ENCODE measurements at regions of chr2 and their contacts with region 1.

Region 1: DNA sequence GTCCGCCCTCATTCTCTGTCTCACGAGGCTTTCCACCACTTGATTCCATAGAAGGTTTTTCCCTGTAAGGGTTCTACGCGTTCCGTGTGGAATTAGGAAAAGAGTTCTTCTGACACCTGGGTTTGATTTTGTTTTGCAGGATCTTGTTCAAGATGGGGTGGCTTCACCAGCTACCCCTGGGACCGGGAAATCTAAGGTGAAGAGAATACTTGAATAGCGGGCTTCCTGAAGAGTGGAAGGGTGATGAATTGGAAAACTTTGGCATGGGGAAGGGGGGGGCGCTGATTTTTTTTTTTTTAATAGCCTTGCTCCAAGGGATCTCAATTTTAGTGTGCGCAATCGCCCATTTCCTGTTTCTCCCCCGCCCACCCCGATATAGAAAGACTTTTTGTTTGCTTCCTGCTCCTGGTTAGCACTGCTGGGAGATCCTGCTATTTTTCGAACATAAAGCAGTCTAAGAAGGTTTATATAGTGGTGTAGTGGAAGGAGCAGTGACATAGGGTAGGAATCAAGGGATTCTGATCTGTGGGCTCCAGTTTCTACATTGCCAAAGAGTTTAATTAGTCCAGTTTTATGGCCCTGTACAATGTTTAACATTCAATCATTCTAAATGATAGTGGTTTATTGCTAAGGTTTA is 606 bp downstream of the GCC2 start:
- DNase-seq: no peak

Region 2: GRCh38 chr2:108315444-108315934 is 134.1 kb before region 1 on chr2:
- in situ Hi-C with region 1: no loop called
- DNase-seq: peak; percentile 76

Region 3: DNA sequence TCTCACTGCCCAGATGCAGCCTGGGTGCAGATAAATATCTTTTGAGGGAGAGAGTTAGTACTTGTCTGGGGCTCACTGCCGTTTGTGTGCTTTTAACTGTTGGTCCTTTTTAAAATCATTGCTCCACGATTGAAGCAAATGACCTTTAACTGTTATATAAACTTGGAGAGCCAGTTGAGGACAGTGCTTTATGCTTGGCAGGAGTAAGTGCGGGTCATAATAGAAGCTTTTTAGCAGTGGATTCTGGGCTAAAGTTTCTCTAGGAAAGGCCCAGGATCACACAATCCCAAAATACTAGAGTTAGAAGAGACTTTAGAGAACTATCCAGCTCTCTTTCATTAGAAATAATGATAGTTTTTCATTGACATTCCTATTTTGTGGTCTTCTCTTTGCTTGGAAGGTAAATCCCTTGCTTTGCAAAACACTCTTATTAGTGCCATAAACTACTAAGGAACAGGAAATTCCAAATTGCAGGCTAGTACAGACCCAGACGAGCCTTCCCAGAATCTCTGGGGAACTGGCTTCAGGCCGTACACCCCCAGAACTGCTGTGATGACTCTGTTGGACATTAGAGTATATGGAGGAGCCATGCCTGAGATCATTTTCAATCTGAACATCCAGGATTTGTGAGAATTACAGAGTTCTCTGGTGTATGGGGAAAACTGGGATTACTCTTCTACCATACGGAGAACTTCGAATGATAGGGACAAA is 103.8 kb after region 1 on chr2:
- in situ Hi-C with region 1: loop called (anchors 10 kb)
- DNase-seq: no peak

Region 4: GRCh38 chr2:109057686-109058085 is 608.1 kb after region 1 on chr2:
- in situ Hi-C with region 1: no loop called
- DNase-seq: no peak

Measured in Caki2 (cell line).